Gastrocnemius medialis (tissue), 4 donors: ENCODE measurements at regions of chr2 and their contacts with region 1.

Region 1: DNA sequence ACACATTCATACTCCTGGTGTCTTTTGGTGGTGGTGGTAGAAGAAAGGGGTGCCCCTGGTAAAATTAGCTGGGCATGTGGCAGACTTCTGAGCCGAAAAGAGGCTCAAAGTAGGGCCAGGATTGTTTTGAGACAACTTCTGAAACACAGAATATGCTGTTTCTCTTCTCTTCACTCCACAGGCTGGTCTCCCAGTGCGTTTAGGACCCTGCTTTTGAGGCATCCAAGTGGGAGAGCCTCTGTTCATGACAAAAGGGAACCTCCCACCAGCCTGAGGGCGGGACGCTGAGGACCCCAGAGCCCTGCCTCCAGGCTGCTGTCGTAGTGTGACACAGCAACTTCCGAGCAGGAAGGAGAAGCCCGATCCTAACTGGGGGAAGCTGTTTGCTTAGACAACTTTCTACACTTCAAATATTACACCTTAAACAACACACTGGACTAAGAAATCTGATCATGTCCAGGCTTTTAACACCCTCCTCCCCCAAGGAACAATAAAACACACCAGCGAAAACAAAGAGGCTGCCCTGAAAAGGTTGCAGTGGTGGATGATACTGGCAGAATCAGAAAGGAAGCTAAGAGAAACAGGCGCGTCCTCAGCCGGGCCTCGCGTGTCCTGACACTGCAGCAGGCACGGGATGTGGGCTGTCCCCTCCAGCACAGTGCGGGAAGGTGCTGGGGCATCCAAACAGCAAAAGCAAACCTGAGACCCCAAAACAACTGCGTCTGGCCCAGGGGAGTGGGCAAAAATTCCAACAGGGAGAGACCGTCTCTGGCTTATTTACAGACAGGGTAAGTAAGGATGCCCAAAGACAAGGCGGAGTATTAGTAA is 9.3 kb downstream of the SERTAD2 start:
- DNase-seq: peak; percentile 62 to 70
- ATAC-seq: peak; percentile 76 to 81
- H3K4me3 ChIP-seq: peak overlapping the region; percentile 49 to 61 (median 58)
- H3K27ac ChIP-seq: peak overlapping the region; percentile 85 to 93 (median 92)
- H3K4me1 ChIP-seq: peaks cover 54 to 58% of the 10 kb centered on the region in 2 donors
- H3K27me3 ChIP-seq: no peaks in the 10 kb centered on the region
- CTCF ChIP-seq: no peak
- POLR2A ChIP-seq: peak; percentile 67 to 82

Region 2: DNA sequence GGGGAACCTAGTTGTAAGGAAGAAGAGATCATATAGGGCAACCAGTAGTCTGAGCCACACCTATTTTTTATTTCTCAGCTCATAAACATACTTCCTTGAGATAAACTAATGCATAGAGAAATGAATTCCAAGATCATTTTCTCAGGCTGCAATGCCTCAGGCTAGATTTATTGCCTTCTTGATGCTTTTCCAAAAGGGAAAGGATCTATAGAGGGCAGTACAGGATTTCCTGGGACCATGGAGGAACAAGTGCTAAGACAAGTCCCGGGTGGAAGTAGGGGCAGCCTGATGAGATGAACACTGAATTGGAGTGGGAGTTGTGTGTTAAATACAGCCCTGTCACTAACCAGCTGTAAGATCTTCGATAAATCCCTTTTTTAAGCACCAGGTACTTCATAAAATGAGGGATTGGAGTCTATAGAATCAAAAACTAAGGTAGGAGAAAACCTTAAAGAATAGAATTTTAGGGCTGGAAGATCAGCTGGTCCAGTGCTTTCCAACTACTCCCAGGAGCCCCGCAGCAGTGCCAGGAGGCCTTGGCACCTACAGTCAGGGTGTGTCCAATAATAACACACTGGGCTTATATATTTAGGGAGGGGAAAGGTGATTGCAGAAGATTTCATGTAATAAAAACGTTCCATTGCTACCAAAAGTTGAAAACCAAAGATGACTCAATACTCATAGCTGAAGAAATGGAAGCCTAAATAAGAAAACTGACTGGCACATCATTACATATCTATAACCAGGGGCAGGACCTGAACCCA is 48.8 kb before region 1 on chr2:
- in situ Hi-C with region 1: no loop called
- intact Hi-C with region 1: loop called (anchors 2 kb)
- DNase-seq: no peak
- ATAC-seq: no peak
- H3K4me3 ChIP-seq: no peak overlapping the region
- H3K27ac ChIP-seq: no peak overlapping the region
- H3K4me1 ChIP-seq: peaks cover 0 to 8% of the 10 kb centered on the region in 2 donors
- H3K27me3 ChIP-seq: no peaks in the 10 kb centered on the region
- CTCF ChIP-seq: peak in 2 of 5 experiments; percentile 19 to 44
- POLR2A ChIP-seq: no peak

Region 3: DNA sequence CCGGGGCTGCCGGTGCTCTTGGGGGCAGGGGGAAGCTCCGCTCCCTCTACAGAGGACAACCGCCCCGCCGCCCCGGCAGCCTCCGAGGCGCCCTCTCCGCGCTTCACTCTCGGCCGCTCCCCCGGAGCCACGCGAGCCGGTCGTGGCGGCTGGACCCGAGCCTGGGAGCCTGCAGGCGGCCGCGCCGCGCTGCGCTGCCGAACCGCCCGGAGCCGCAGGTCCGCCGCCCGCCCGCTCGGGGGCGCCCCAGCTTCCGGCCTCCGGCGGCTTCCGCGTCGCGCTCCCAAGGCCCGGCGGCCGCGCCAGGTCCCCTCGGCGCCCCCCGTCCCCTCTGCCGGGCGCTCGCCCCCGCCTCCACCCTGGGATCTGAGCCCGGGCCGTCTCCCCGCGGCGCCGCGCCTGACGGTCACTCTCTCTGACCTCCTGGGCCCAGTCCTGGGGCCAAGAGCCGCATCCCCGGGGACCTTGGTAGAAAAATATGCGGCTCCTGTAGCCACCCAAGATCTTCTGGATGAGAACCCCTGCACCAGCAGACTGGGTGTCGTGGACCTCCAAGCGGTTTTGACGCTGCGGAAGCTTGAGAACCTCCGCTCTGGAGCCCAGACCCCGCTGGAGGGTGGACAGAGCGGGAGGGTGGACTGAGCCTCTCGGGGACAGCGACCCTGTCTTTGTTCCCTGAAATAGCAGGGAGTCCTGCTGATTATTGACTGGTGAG is 35.0 kb before region 1 on chr2:
- in situ Hi-C with region 1: no loop called
- intact Hi-C with region 1: loop called (anchors 5 kb)
- DNase-seq: peak in 1 of 2 donors; percentile 34
- ATAC-seq: peak; percentile 76 to 79
- H3K4me3 ChIP-seq: peak overlapping the region; percentile 59 to 85 (median 66)
- H3K27ac ChIP-seq: peak overlapping the region; percentile 65 to 83 (median 77)
- H3K4me1 ChIP-seq: peaks cover 8 to 11% of the 10 kb centered on the region in 2 donors
- H3K27me3 ChIP-seq: no peaks in the 10 kb centered on the region
- CTCF ChIP-seq: peak in 4 of 5 experiments; percentile 71 to 76 (median 74)
- POLR2A ChIP-seq: peak in 1 of 2 donors; percentile 24

Region 4: DNA sequence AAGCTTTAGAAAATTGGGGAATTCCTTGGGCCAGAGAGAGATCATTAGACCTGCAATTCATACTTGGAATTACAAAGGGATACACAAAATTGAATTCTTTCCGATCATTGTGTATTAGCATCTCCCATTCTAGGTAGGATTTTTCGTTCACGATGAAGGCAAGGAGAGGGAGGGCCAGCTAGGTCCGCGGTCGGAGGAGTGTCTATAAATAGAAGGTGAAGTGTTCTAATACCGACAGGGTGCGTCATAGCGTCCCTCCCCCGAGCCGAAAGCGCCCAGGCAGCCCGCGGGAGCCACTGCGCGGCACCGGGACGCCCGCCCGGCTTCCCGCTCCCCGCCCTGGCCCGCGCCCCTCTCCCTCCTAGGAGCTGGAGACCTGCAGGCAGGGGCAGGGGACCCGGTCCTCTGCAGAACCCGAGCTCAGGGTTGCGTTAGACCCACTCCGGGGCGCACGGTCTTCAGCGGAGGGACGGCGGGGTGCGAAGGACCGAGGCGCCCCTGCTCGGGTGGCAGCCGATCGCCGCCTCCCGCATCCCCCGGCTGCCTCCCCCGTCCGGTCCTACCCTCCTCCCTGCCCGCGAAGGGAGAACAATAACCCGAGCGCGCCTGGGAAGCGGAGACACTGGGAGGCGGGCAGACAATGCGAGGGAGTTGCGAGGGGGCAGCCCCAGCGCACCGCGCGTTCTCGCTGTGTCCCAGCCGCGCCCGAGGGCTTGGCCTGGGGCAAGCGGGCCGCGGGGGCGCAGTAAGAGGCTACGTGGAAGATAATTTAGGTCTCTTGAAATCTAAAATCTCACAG is 123.5 kb after region 1 on chr2:
- in situ Hi-C with region 1: no loop called
- intact Hi-C with region 1: loop called (anchors 2 kb)
- DNase-seq: peak; percentile 88 to 89
- ATAC-seq: peak; percentile 98
- H3K4me3 ChIP-seq: peak overlapping the region; percentile 77 to 91 (median 84)
- H3K27ac ChIP-seq: peak overlapping the region; percentile 93 to 99 (median 97)
- H3K4me1 ChIP-seq: peaks cover 4 to 13% of the 10 kb centered on the region in 2 donors
- H3K27me3 ChIP-seq: no peaks in the 10 kb centered on the region
- CTCF ChIP-seq: peak in 1 of 5 experiments; percentile 10
- POLR2A ChIP-seq: peak; percentile 89 to 90

Region 5: GRCh38 chr2:64865073-64865830 is 220.9 kb after region 1 on chr2:
- in situ Hi-C with region 1: loop called in 1 of 4 experiments (anchors 10 kb)
- intact Hi-C with region 1: loop called (anchors 1 kb)
- DNase-seq: peak; percentile 39 to 58
- ATAC-seq: peak; percentile 90 to 91
- H3K4me3 ChIP-seq: peak overlapping the region; percentile 77 to 80 (median 78)
- H3K27ac ChIP-seq: peak overlapping the region; percentile 77 to 87 (median 84)
- H3K4me1 ChIP-seq: peaks cover 5 to 23% of the 10 kb centered on the region in 2 donors
- H3K27me3 ChIP-seq: no peaks in the 10 kb centered on the region
- CTCF ChIP-seq: peak; percentile 48 to 99 (median 98)
- POLR2A ChIP-seq: no peak

Region 6: DNA sequence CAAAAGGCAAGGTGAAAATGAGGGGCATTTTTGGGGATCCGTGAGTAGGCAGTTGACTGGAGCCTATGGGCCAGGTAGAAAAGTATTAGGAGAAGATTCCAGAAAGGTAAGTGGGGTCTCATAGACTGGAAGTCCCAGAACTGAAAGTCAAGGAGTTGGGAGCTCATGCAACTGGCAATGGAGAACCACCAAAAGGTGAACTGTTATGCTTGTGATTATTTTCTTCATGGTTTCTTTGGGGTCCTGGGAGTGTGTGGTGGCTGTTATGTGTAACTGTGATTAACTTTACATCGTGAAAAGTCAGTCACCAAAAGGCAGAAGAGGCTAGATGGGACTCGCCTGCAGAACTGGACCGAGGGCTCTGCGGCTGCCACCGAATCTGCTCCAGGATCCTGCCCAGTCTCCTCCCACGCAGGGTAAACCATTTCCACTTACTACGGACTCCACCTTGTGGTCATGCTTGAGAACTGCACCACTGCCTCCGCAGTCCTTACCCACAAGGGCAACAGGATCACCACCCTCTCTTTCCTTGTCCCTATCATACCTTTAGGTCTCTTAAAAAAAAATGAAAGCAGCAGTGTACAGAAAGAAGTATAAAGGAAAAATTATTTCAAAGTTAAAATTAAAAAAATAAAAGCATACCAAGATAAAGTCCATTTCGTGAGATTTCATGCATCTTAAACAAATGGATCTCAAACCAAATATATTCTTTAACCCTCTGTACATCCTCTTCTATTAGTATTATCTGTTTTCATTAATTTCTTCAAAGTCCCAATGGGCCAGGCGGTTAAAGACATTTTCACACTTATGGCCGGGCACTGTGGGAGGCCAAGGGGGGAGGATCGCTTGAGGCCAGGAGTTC is 396.2 kb after region 1 on chr2:
- in situ Hi-C with region 1: loop called in 1 of 4 experiments (anchors 25 kb)
- intact Hi-C with region 1: no loop called
- DNase-seq: peak; percentile 78 to 86
- ATAC-seq: peak; percentile 97
- H3K4me3 ChIP-seq: peak overlapping the region in 1 of 4 donors; percentile 37
- H3K27ac ChIP-seq: no peak overlapping the region
- H3K4me1 ChIP-seq: peaks cover 0 to 5% of the 10 kb centered on the region in 2 donors
- H3K27me3 ChIP-seq: no peaks in the 10 kb centered on the region
- CTCF ChIP-seq: peak; percentile 94 to 98 (median 95)
- POLR2A ChIP-seq: no peak